ENCODE measurements at regions of chr2 and their contacts with region 1.

Region 1: GRCh38 chr2:190911813-190912212 is 31.2 kb downstream of the GLS start:
- DNase-seq: no peak
- H3K4me3 Mint-ChIP-seq: no peak overlapping the region
- H3K27ac Mint-ChIP-seq: peak overlapping the region; percentile 51
- H3K4me1 Mint-ChIP-seq: peaks cover 48% of the 10 kb centered on the region
- H3K27me3 Mint-ChIP-seq: no peaks in the 10 kb centered on the region

Region 2: GRCh38 chr2:190875891-190876290 is 35.9 kb before region 1 on chr2:
- CTCF ChIA-PET with region 1: no interaction called
- intact Hi-C with region 1: no loop called
- DNase-seq: peak; percentile 59
- H3K4me3 Mint-ChIP-seq: peak overlapping the region; percentile 53
- H3K27ac Mint-ChIP-seq: peak overlapping the region; percentile 79
- H3K4me1 Mint-ChIP-seq: peaks cover 30% of the 10 kb centered on the region
- H3K27me3 Mint-ChIP-seq: no peaks in the 10 kb centered on the region

Region 3: DNA sequence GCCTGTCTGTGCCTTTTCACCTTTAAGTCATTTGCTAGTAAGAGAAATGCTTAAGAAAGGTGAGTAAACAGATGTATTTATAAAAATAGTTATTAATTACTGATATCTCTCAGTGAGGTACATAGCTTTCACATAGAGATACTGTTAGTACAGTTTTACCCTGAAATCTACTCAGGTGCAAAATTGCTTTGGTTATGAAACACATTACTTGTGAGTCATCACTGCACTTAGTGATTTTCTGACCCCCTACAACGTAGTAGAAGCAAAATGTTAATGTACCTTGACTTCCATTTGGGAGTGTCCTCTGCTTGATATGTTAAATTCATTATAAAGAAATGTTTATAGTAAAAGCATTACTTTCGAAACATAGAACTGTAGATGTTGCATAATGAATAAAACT is 24.7 kb before region 1 on chr2:
- CTCF ChIA-PET with region 1: interaction called, 4 read pairs
- intact Hi-C with region 1: loop called (anchors 1 kb)
- DNase-seq: no peak
- H3K4me3 Mint-ChIP-seq: no peak overlapping the region
- H3K27ac Mint-ChIP-seq: no peak overlapping the region
- H3K4me1 Mint-ChIP-seq: peaks cover 66% of the 10 kb centered on the region
- H3K27me3 Mint-ChIP-seq: no peaks in the 10 kb centered on the region

Region 4: DNA sequence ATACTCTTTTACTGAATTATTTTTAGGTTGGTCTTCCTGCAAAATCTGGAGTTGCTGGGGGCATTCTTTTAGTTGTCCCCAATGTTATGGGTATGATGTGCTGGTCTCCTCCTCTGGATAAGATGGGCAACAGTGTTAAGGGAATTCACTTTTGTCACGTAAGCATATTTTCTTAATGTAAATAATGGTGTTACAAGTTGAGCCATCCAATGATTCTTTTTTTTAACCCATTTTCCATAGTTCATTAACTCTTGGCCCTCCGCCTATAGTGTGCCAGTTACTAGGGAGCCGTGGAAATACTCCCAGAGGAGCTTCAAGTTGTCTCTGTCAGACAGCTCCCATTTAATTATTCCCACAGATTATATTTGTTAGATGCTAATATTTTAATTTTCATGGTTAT is 18.6 kb after region 1 on chr2:
- CTCF ChIA-PET with region 1: no interaction called
- intact Hi-C with region 1: no loop called
- DNase-seq: no peak
- H3K4me3 Mint-ChIP-seq: no peak overlapping the region
- H3K27ac Mint-ChIP-seq: no peak overlapping the region
- H3K4me1 Mint-ChIP-seq: peaks cover 22% of the 10 kb centered on the region
- H3K27me3 Mint-ChIP-seq: no peaks in the 10 kb centered on the region

Region 5: DNA sequence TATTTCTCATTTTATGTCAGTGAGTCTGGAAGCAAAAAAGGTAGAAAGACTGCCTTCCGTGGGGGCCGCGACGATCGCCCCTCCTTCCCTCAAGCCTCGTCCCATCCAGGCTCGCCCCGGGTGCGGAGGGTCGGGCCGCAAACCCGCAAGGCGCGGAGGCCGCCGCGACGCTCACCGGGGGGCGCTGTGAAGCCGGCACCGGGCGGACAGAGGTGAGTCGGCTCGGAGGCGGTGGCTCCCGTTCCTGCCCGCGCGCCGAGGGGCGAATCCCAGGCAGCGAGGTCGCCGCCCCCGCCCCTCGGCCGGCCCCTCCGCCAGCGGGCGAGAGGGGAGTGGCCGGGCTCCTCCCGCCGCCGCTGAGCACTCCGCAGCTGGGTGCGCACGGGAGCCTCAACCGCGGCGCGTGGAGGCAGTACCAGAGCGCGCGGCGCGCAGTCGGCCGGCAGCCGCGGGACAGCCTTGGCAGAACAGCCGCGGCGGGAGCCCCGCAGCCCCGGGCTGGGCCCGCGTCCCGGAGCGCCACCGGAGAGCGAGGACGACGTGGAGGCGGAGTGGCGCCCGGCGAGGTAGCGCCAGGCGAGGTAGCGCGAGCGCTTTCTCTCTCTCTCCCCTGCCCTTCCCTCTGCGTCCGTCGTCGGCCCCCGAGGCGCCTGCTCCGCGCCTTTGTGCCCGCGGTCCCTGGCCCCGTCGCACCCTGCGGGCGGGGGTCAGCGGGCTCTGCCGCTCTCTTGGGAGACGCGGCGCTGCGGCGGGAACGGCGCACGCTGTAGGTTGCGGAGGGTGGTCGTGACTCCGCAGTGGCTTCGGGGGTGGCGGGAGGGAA is 333.4 kb after region 1 on chr2 and contains the start of gene MYO1B:
- CTCF ChIA-PET with region 1: no interaction called
- intact Hi-C with region 1: no loop called
- DNase-seq: peak; percentile 79
- H3K4me3 Mint-ChIP-seq: peak within 1 kb of the TSS; percentile 82
- H3K27ac Mint-ChIP-seq: peak within 1 kb of the TSS; percentile 22
- H3K4me1 Mint-ChIP-seq: peaks cover 21% of the 10 kb centered on the region
- H3K27me3 Mint-ChIP-seq: no peaks in the 10 kb centered on the region
- total RNA-seq, gene MYO1B: 39.2 to 40.5 TPM

Measured in activated naive CD4-positive, alpha-beta T cell treated with anti-CD3 and anti-CD28 coated beads for 36 hours (primary cell).